ENCODE measurements at regions of chr11 and their contacts with region 1.

Region 1: GRCh38 chr11:14480716-14481115 is 18.9 kb downstream of the COPB1 start:
- DNase-seq: no peak
- ATAC-seq: no peak
- H3K4me3 ChIP-seq: no peak overlapping the region
- H3K27ac ChIP-seq: no peak overlapping the region
- H3K4me1 ChIP-seq: no peaks in the 10 kb centered on the region
- H3K27me3 ChIP-seq: no peaks in the 10 kb centered on the region
- CTCF ChIP-seq: no peak
- POLR2A ChIP-seq: no peak
- RAD21 ChIP-seq: no peak

Region 2: GRCh38 chr11:14513800-14514199 is 33.1 kb after region 1 on chr11:
- CTCF ChIA-PET with region 1: interaction called, 3 read pairs
- POLR2A ChIA-PET with region 1: no interaction called
- dilution Hi-C with region 1: no loop called
- in situ Hi-C with region 1: no loop called
- intact Hi-C with region 1: loop called (anchors 5 kb)
- DNase-seq: no peak
- ATAC-seq: no peak
- H3K4me3 ChIP-seq: no peak overlapping the region
- H3K27ac ChIP-seq: no peak overlapping the region
- H3K4me1 ChIP-seq: no peaks in the 10 kb centered on the region; the same call in 1 of the 2 replicates
- H3K27me3 ChIP-seq: no peaks in the 10 kb centered on the region
- CTCF ChIP-seq: no peak
- POLR2A ChIP-seq: no peak
- RAD21 ChIP-seq: no peak

Region 3: DNA sequence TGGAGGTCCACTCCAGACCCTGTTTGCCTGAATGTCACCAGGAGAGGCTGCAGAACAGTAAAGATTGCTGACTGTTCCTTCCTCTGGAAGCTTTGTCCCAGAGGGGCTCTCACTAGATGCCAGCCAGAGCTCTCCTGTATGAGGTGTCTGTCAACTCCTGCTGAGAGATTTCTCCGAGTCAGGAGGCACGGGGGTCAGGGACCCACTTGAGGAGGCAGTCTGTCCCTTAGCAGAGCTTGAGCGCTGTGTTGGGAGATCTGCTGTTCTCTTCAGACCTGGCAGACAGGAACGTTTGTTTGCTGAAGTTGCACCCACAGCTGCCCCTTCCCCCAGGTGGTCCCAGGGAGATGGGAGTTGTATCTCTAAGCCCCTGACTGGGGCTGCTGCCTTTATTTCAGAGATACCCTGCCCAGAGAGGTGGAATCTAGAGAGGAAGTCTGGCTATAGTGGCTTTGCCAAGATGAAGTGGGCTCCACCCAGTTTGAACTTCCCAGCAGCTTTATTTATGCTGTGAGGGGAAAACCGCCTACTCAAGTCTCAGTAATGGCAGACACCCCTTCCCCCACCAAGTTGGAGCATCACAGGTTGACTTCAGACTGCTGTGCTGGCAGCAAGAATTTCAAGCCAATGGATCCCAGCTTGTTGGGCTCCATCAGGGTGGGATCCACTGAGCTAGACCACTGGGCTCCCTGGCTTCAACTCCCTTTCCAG is 262.3 kb after region 1 on chr11:
- CTCF ChIA-PET with region 1: no interaction called
- POLR2A ChIA-PET with region 1: no interaction called
- dilution Hi-C with region 1: no loop called
- in situ Hi-C with region 1: no loop called
- intact Hi-C with region 1: no loop called
- DNase-seq: no peak
- ATAC-seq: no peak
- H3K4me3 ChIP-seq: no peak overlapping the region
- H3K27ac ChIP-seq: no peak overlapping the region
- H3K4me1 ChIP-seq: no peaks in the 10 kb centered on the region
- H3K27me3 ChIP-seq: no peaks in the 10 kb centered on the region
- CTCF ChIP-seq: no peak
- POLR2A ChIP-seq: no peak
- RAD21 ChIP-seq: no peak